ENCODE measurements at regions of chr2 and their contacts with region 1.

Region 1: DNA sequence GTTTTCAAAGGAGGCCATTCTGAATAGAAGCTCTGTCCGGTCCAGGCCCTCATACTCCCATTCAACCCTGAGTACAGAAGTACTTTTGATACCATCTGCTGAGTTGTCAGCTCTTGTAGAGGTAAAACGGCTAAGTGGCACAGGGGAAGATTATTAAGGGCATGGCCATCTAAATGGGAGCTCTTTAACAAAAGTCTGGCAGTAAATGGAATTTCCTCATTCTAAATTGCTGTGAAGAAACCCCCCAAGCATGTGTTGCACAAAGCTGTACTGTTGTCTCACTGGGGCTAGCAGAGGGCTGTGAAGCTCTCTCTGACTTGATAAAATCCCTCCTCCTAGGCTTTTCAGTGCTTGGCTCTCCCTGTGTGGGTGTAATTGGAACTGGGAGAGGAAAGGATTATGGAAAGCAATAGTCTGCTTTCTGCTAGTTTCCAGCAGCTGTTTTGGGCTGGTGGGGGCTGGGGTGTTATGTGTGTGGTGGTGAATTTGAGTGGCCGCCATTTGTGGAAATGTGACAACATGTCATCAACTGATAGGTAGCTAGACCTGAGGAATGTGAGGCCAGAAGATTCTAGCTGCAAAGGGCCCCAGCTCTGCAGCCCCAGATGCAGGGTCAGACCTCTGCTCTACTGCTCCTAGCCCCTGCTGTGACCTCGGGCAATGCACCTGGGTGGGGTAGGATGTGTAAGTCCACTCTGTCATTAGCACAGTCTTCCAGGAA is 65.1 kb downstream of the MAP4K4 start:
- DNase-seq: no peak
- H3K4me3 ChIP-seq: no peak overlapping the region
- H3K27ac ChIP-seq: no peak overlapping the region
- H3K4me1 ChIP-seq: peaks cover 4% of the 10 kb centered on the region
- H3K27me3 ChIP-seq: no peaks in the 10 kb centered on the region
- CTCF ChIP-seq: no peak
- POLR2A ChIP-seq: no peak

Region 2: DNA sequence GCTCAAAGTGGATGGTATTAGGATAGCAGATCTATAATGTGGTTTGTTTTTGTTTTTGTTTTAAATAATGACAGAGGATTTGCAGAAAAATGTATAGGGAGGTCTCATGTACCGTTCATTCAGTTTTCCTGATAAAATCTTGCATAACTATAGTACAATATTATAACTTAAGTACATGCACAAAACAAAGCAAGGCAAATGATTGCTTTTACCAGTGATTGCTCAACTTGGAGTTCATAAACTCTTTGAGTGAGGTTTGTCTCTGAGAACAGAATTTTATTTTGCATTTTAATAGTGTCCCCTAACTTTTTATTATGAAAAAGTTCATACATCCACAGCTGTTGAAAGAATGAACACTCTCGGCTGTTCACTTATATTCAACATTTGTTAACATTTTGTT is 31.5 kb after region 1 on chr2:
- intact Hi-C with region 1: loop called (anchors 2 kb)
- DNase-seq: no peak
- H3K4me3 ChIP-seq: no peak overlapping the region
- H3K27ac ChIP-seq: no peak overlapping the region
- H3K4me1 ChIP-seq: no peaks in the 10 kb centered on the region
- H3K27me3 ChIP-seq: no peaks in the 10 kb centered on the region
- CTCF ChIP-seq: no peak
- POLR2A ChIP-seq: no peak

Region 3: DNA sequence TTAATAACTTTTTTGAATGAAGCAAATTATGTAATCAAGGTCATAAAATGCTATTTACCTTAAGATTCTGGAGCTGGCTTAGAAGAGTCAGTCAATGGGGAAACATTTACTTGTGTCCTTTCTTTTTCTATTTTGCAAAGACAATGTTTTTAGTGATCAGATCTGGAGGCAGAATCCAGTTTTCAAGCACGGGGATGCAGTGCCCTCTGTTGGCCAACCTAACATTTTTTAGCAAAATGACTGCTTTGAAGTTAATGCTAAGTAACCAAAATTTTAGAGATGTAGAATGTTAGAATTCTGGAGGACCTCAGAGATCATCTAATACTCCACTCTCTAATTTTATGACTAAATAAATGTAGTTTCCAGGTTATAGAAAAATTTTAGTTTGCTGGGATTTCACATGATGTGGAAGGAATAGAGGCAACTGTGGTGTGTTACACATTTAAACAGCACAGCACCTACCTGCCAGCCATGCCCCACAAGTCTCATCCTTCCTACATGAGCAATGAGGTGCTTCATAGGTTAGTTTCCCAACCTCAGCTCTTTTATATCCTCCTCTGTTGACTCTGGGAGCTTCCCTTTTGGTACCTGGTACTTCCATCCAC is 686.9 kb after region 1 on chr2:
- intact Hi-C with region 1: no loop called
- DNase-seq: peak; percentile 24
- H3K4me3 ChIP-seq: no peak overlapping the region
- H3K27ac ChIP-seq: no peak overlapping the region
- H3K4me1 ChIP-seq: no peaks in the 10 kb centered on the region
- H3K27me3 ChIP-seq: no peaks in the 10 kb centered on the region
- CTCF ChIP-seq: peak in 3 of 4 experiments; percentile 42 to 56 (median 55)
- POLR2A ChIP-seq: no peak

Measured in prostate gland (tissue), 2 donors.